ENCODE measurements at regions of chr9 and their contacts with region 1.

Region 1: GRCh38 chr9:124350494-124351263 is 64.6 kb downstream of the PSMB7 start:
- DNase-seq: no peak
- H3K4me3 ChIP-seq: no peak overlapping the region
- H3K27ac ChIP-seq: no peak overlapping the region
- H3K4me1 ChIP-seq: no peaks in the 10 kb centered on the region
- H3K27me3 ChIP-seq: no peaks in the 10 kb centered on the region

Region 2: GRCh38 chr9:123534336-123534735 is 816.3 kb before region 1 on chr9:
- CTCF ChIA-PET with region 1: no interaction called
- POLR2A ChIA-PET with region 1: interaction called, 10 read pairs
- DNase-seq: no peak
- H3K4me3 ChIP-seq: no peak overlapping the region
- H3K27ac ChIP-seq: no peak overlapping the region
- H3K4me1 ChIP-seq: no peaks in the 10 kb centered on the region
- H3K27me3 ChIP-seq: no peaks in the 10 kb centered on the region

Region 3: GRCh38 chr9:124332361-124333202 is 18.1 kb before region 1 on chr9:
- CTCF ChIA-PET with region 1: no interaction called
- POLR2A ChIA-PET with region 1: no interaction called
- DNase-seq: no peak
- H3K4me3 ChIP-seq: no peak overlapping the region
- H3K27ac ChIP-seq: no peak overlapping the region
- H3K4me1 ChIP-seq: no peaks in the 10 kb centered on the region
- H3K27me3 ChIP-seq: no peaks in the 10 kb centered on the region

Measured in common myeloid progenitor, CD34-positive (primary cell).